Activated CD8-positive, alpha-beta T cell treated with anti-CD3 and anti-CD28 coated beads, Interleukin-2, amount 10 ng/mL, durations not matched to agents 7 days and 5 days (primary cell): ENCODE measurements at regions of chr19 and their contacts with region 1.

Region 1: GRCh38 chr19:58558623-58559274 is 338 bp upstream of the UBE2M start:
- DNase-seq: peak; percentile 100
- ATAC-seq: peak; percentile 67
- H3K4me3 Mint-ChIP-seq: peak overlapping the region; percentile 96
- H3K27ac Mint-ChIP-seq: peak overlapping the region; percentile 99
- H3K4me1 Mint-ChIP-seq: peaks cover 69% of the 10 kb centered on the region
- H3K27me3 Mint-ChIP-seq: no peaks in the 10 kb centered on the region

Region 2: DNA sequence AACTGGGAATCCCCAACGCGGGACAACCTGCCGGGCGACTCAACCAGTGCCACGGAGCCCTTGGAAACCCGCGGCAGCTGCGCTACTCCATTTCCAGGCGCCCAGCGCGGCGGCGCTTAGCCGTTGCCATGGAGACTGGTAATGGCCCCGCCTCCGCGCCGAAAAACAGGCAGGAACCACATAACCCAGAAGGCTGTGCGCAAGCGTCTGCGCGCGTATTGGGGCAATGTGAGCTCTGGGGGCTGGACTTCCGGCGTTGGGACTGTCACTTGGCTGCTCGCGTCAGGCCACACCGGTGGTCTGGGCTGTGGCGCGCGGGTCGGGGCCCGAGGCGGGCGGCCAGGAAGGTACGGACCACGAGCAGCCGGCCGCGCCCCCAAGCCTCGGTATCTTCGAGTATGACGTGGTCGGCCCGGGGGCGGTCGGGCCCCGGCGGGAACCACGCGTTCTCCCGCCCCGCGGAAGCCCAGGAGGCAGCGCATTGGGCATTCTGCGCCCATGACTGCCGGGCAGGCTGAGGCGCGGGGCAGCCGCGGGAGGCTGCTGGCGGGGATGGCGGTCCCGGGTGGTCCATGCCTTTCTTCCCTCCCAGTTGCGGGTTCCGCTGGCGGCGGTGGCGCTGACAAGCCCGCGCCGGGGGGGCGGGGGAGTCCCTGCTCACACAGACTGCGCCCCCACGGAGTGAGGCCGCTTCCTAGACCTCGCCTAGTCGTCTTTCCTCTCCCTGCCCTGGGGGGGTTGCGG is 107.2 kb before region 1 on chr19 and contains the start of gene ZNF324B:
- CTCF ChIA-PET with region 1: no interaction called
- POLR2A ChIA-PET with region 1: no interaction called
- DNase-seq: peak; percentile 98
- ATAC-seq: peak; percentile 97
- H3K4me3 Mint-ChIP-seq: peak within 1 kb of the TSS; percentile 73
- H3K27ac Mint-ChIP-seq: peak within 1 kb of the TSS; percentile 55
- H3K4me1 Mint-ChIP-seq: peaks cover 22% of the 10 kb centered on the region
- H3K27me3 Mint-ChIP-seq: peaks cover 3% of the 10 kb centered on the region
- total RNA-seq, gene ZNF324B: 10.6 to 12.5 TPM

Region 3: GRCh38 chr19:58543826-58544590 is 14.7 kb before region 1 on chr19 and contains the start of gene TRIM28:
- CTCF ChIA-PET with region 1: interaction called, 3 read pairs
- POLR2A ChIA-PET with region 1: interaction called, 51 read pairs
- DNase-seq: peak; percentile 100
- ATAC-seq: peak; percentile 94
- H3K4me3 Mint-ChIP-seq: peak within 1 kb of the TSS; percentile 97
- H3K27ac Mint-ChIP-seq: peak within 1 kb of the TSS; percentile 96
- H3K4me1 Mint-ChIP-seq: peaks cover 35% of the 10 kb centered on the region
- H3K27me3 Mint-ChIP-seq: peaks cover 18% of the 10 kb centered on the region
- total RNA-seq, gene TRIM28: 476 to 528 TPM

Region 4: DNA sequence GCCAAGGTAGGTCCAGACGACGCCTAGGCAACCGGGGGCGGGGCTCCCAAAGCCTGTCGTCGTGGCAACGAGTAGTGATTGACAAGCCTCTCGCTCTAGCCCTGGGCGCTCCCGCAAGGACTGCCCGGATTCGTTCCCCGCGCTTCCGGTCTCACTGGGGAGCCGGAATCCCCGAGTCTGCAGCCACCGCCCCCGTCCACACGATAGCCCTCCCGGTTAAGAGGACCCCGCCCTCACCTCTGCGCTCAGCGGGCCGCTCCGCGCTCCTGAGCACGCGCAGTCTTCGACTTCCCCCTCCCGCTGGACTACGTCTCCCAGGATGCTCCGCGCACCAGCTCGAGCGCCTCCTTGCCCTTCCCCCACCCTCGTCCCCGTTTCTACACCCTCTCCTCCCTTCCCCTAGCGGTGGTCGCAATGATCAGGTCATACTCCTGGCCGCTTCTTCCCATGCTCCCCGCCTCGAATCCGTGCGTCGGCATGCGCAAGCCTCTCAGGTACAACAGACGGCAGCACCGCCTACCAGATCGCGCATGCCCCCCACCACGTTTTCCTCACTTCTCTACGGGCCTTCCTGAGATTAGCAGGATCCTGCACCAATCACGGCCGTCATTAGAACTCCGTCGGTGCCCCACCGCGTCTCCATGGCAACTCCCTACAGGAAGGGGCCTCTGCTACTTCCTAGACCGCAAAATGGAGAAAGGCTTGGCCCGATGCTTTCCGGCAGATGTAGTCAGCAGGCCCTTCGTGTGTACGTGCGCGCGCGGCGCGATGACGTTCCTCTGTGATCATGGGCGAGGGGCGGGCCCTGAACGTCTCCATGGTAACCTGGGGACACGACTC is 14.3 kb after region 1 on chr19 and contains the start of gene MZF1:
- CTCF ChIA-PET with region 1: interaction called, 5 read pairs
- POLR2A ChIA-PET with region 1: interaction called, 14 read pairs
- DNase-seq: peak; percentile 100
- ATAC-seq: peak; percentile 62
- H3K4me3 Mint-ChIP-seq: peak within 1 kb of the TSS; percentile 86
- H3K27ac Mint-ChIP-seq: peak within 1 kb of the TSS; percentile 99
- H3K4me1 Mint-ChIP-seq: peaks cover 43% of the 10 kb centered on the region
- H3K27me3 Mint-ChIP-seq: no peaks in the 10 kb centered on the region
- total RNA-seq, gene MZF1: 20.0 to 20.6 TPM

Region 5: DNA sequence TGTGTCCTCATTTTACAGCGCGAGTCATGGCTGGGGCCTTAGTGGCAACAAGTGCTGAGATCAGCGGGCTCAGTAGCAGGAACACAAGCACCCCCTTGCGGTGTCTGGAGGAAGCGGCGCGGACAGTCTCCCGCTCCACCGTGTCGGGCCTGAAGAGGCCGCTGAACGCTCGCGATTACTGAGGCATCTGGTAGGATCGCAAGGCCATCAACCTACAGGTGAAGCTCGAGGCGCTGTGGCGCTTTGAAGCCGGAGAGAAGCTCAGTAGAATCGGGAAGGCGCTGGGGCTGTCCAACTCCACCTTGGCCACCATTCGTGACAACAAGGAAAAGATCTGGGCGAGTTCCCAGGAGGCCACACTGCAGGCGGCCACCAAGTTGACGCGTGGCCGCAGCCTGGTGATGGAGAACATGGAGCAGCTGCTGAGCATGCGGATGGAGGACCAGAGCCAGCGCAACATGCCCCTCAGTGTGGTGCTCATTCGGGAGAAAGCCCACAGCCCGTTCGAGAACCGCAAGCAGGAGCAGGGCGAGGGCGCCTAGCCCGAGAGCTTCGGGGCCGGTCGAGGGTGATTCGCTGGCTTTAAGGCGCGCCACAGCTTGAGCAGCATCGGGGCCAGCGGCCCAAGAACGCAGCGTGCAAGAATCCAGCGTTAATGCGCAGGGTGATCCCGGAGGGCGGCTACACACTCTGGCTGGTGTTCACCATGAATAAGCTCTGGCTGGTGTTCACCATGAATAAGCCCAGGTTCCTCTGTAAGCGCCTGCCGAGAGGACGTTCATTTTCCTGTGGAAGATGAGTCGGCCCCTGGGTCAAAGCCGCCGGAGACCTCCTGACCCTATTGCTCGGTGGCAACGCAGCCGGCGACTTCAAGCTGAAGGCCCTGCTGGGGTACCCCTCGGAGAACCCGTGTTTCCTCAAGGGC is 22.7 kb after region 1 on chr19:
- CTCF ChIA-PET with region 1: interaction called, 17 read pairs
- POLR2A ChIA-PET with region 1: interaction called, 5 read pairs
- DNase-seq: peak; percentile 95
- ATAC-seq: peak; percentile 94
- H3K4me3 Mint-ChIP-seq: no peak overlapping the region
- H3K27ac Mint-ChIP-seq: peak overlapping the region; percentile 79
- H3K4me1 Mint-ChIP-seq: peaks cover 21% of the 10 kb centered on the region
- H3K27me3 Mint-ChIP-seq: no peaks in the 10 kb centered on the region